ENCODE measurements at regions of chr4 and their contacts with region 1.

Region 1: GRCh38 chr4:1243451-1244080 is 5.4 kb downstream of the CTBP1 start:
- DNase-seq: no peak
- H3K4me3 ChIP-seq: no peak overlapping the region
- H3K27ac ChIP-seq: no peak overlapping the region
- H3K4me1 ChIP-seq: peaks cover 21% of the 10 kb centered on the region
- H3K27me3 ChIP-seq: no peaks in the 10 kb centered on the region
- CTCF ChIP-seq: no peak

Region 2: GRCh38 chr4:1200425-1201035 is 43.0 kb before region 1 on chr4:
- CTCF ChIA-PET with region 1: no interaction called
- dilution Hi-C with region 1: loop called (anchors 5 kb)
- in situ Hi-C with region 1: no loop called
- intact Hi-C with region 1: no loop called
- DNase-seq: no peak
- H3K4me3 ChIP-seq: no peak overlapping the region
- H3K27ac ChIP-seq: no peak overlapping the region
- H3K4me1 ChIP-seq: peaks cover 9% of the 10 kb centered on the region
- H3K27me3 ChIP-seq: no peaks in the 10 kb centered on the region
- CTCF ChIP-seq: no peak

Region 3: DNA sequence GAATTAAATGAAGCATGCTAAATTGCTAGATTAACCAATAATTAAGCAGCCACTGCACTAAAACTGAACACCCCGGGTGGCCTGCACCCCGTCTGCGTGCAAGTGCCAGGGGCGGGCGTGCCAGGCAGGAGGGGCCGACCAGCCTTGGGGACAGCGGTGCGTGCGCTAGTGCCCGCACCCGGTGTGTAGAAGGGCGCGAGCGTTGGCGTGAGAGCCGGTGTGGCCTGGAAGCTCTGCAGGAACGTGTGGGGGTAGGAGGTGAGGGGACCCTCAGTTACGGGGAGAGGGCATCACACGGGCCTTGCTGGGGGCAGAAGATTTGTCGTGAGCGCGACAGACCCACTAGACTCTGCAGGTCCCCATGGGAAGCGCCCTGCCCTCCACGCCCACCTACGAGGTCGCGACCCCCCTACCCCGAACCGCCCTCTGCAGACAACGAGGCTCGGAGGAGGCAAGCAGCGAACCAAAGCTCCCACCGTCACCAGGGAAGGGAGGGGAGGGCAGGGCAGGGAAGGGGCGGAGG is 334.7 kb after region 1 on chr4:
- CTCF ChIA-PET with region 1: no interaction called
- dilution Hi-C with region 1: no loop called
- in situ Hi-C with region 1: no loop called
- intact Hi-C with region 1: no loop called
- DNase-seq: no peak
- H3K4me3 ChIP-seq: peak overlapping the region in 1 of 3 experiments; percentile 26
- H3K27ac ChIP-seq: no peak overlapping the region
- H3K4me1 ChIP-seq: peaks cover 10% of the 10 kb centered on the region
- H3K27me3 ChIP-seq: no peaks in the 10 kb centered on the region
- CTCF ChIP-seq: no peak